ENCODE measurements at regions of chr13 and their contacts with region 1.

Region 1: DNA sequence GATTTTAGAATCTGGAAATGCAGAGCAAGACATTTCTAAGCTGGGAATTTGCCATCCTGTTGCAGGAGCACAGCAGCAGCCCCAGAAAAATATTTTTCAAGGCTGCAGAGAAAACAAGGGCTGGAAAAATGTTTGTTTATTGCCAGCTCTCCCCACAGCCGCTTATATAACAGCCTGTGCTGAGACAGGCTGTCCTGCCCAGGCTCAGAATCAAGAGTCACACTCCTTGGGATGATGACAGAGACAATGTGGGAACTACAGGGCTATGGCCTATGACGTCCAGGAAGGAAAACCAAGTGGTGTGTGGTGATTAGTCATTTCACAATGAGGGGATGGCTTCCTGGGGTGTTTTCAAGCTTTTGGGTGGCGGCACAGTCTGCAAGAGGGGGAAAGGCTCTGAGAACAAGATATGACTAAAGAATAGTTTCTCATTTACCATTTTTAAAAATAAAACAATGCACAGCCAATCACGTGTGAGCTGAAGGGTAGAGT is 136.3 kb upstream of the SERP2 start:
- DNase-seq: peak; percentile 58 to 85 (median 62)
- H3K4me3 ChIP-seq: no peak overlapping the region
- H3K27ac ChIP-seq: peak overlapping the region; percentile 56 to 80
- H3K4me1 ChIP-seq: peaks cover 14% of the 10 kb centered on the region
- H3K27me3 ChIP-seq: no peaks in the 10 kb centered on the region
- CTCF ChIP-seq: no peak
- EP300 ChIP-seq: peak; percentile 94
- POLR2A ChIP-seq: no peak

Region 2: DNA sequence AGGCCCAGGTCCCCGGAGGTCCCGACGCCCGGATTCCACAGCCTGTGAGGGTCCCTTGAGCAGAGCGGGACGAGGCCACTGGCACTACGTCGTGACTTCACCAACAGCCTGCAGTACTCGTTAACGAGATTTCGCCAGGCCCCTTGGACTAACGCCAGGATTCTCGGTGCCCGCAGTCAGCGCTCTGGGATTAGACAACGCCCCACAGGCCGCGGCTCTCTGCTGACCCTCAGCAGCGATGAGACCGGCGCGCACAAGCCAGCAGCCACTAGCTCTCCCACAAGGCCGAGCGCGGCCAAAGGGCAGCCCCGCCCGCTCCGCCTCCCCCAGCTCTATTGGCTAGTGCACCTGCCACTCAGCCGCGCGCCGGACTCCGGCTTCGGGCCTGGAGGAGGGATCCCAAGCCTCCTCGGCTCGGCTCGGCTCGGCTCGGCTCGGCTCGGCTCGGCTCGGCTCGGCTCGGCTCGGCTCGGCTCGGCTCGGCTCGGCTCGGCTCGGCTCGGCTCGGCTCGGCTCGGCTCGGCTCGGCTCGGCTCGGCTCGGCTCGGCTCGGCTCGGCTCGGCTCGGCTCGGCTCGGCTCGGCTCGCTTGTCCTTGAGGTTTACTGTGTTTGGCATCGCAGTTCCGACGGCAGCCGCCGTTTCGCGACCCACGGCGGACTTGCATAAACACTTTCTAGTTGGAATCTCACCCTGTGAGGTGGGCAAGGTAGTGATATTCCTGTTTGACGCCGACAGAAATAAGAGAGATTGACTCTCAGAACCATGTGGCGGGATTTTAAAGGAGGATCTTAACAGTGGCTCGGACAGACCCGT is 95.4 kb before region 1 on chr13:
- intact Hi-C with region 1: loop called in 1 of 4 experiments (anchors 10 kb)
- DNase-seq: peak; percentile 98 to 100 (median 99)
- H3K4me3 ChIP-seq: peak overlapping the region; percentile 67
- H3K27ac ChIP-seq: peak overlapping the region; percentile 77 to 83
- H3K4me1 ChIP-seq: peaks cover 7% of the 10 kb centered on the region
- H3K27me3 ChIP-seq: no peaks in the 10 kb centered on the region
- CTCF ChIP-seq: peak in 2 of 3 donors; percentile 44 to 58
- EP300 ChIP-seq: no peak
- POLR2A ChIP-seq: peak; percentile 95

Measured in ovary (tissue), 10 donors.